Right ventricle myocardium superior (tissue), 1 donor: ENCODE measurements at regions of chr2 and their contacts with region 1.

Region 1: GRCh38 chr2:40511661-40512213 is 59.8 kb upstream of the SLC8A1 start:
- DNase-seq: peak; percentile 29
- ATAC-seq: peak; percentile 57

Region 2: DNA sequence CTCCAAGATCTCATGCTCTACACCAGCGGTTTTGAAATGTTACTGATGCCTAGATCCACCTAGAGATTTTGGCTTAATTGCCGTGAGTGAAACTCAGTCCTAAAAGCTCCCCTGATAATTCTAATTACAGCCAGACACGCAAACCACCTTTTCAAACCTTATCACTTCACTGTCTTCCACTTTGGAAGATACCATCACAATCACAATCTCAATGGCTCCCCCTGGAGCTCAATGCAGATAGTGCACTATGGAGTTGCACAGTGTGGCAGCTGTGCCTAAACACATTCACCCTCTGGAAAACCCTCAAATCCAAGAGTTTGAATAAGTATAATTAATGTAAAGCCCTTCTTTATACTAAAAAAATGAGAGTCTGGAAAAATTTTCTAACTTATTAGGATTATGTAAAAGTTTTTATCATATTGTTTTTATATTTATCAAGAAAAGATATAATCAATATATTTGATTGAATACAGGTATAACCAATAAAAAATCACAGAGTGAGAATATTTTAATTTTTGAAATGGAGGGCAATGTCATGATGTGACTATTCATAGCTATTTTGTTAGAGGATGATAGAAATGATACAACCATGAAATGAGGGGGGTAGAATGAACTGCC is 43.0 kb after region 1 on chr2:
- intact Hi-C with region 1: loop called (anchors 5 kb)
- DNase-seq: peak; percentile 46
- ATAC-seq: peak; percentile 87